ENCODE measurements at regions of chr17 and their contacts with region 1.

Region 1: GRCh38 chr17:45371414-45372327 is 54.9 kb upstream of the MAP3K14 start:
- DNase-seq: peak; percentile 54
- ATAC-seq: peak; percentile 94
- H3K4me3 ChIP-seq: peak overlapping the region in 1 of 2 experiments; percentile 30; a peak in 3 of 4 replicates
- H3K27ac ChIP-seq: peak overlapping the region; percentile 100
- H3K4me1 ChIP-seq: peaks cover 53% of the 10 kb centered on the region
- H3K27me3 ChIP-seq: no peaks in the 10 kb centered on the region
- CTCF ChIP-seq: no peak

Region 2: GRCh38 chr17:45300060-45300751 is 71.5 kb before region 1 on chr17:
- CTCF ChIA-PET with region 1: no interaction called
- POLR2A ChIA-PET with region 1: interaction called, 10 read pairs
- in situ Hi-C with region 1: no loop called
- intact Hi-C with region 1: no loop called
- DNase-seq: no peak
- ATAC-seq: peak; percentile 40
- H3K4me3 ChIP-seq: no peak overlapping the region
- H3K27ac ChIP-seq: peak overlapping the region; percentile 93
- H3K4me1 ChIP-seq: peaks cover 89% of the 10 kb centered on the region
- H3K27me3 ChIP-seq: no peaks in the 10 kb centered on the region
- CTCF ChIP-seq: no peak

Region 3: DNA sequence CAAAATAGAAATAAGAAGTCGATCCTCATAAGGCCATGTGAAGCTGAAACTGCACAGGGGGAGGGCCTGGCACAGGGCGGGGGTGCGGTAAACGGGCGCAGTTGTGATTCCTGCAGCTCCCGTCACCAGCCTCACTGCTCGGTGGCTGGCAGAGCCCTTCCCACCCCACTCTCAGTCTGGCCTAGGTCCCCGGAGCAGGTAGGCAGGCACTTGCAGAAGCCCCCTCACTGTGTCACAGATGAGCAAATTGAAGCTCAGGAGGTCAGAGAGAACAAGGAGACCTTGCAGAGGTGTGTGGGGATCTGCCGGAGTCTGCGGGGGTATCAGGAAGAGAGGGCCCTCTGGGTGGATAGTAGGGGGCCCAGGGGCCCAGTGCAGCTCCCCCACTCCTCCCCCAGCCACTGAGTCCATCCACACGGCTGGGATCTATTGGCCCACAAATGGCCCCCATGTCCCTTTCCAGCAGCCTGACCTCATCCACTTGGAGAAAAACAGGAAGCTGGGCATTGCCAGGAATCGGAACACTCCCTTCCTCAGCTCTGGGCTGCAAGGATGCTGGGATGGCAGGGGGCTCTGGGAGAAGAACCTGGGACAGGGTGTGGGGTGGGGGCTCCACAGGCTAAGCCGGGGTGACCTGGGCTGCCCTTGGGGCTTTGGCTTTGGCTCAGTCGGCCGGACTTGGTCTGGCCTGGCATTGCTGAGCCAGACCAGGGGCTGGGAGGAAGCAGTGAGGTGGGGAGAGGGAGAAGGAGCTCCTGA is 33.5 kb before region 1 on chr17:
- CTCF ChIA-PET with region 1: interaction called, 11 read pairs
- POLR2A ChIA-PET with region 1: no interaction called
- in situ Hi-C with region 1: no loop called
- intact Hi-C with region 1: no loop called
- DNase-seq: no peak
- ATAC-seq: no peak
- H3K4me3 ChIP-seq: no peak overlapping the region
- H3K27ac ChIP-seq: peak overlapping the region; percentile 67
- H3K4me1 ChIP-seq: peaks cover 48% of the 10 kb centered on the region
- H3K27me3 ChIP-seq: no peaks in the 10 kb centered on the region
- CTCF ChIP-seq: no peak